ENCODE measurements at regions of chr6 and their contacts with region 1.

Region 1: GRCh38 chr6:33837971-33838665 is 34.3 kb upstream of the MLN start:
- DNase-seq: no peak
- CTCF ChIP-seq: no peak

Region 2: DNA sequence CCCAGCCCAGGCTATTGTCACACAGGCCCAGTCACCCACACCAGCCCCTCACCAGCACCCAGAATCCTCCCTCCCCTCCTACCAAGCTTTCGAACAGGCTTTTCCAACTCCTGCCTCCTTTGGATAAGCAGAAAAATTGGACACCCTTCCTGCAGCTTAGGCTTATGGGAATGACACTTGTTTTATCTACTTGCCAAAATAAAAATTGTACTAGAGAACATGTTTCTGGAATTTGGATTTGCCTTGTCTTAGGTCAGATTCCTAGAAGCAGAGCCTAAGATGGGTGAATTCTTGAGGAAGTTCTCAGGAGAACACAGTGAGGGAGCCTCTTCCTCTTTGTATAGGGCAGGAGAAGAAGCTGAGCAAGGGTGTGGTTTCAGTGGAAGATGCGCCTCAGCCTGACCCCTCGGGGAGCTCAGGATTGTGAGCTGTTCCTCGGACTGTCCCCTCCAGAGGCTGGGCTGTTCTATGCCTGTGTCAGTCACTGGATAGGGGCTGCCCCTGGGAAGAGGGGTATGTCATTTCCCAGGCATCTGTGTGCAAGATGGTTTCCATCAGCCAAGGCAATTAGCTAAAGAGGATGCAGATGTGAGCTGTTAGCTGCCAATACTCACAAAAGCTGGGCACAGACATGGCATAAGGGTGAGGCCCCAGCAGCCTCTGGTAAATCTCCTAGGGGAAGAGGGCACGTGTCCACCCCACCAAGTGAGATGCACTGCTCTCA is 183.1 kb before region 1 on chr6:
- CTCF ChIA-PET with region 1: no interaction called
- POLR2A ChIA-PET with region 1: no interaction called
- DNase-seq: no peak
- CTCF ChIP-seq: no peak

Region 3: DNA sequence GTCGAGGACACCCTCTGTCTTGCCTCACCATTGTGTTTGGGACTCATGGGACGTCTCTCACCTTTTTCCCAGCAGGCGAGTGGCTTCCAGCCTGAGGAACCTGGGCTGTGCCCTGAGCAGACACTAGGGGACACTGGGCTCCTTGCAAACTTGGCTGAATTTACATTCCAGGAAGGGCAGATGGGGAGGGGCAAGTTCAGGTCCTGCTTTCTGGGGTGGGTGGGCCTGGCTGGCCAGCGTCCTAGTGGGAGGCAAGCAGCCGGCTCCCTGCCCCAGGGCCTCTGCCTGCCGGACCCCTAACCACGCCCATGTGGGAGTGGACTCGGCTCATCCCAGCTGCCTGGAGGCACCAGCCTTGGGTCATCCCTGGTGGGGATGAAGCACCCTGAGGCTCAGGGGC is 13.8 kb after region 1 on chr6:
- CTCF ChIA-PET with region 1: interaction called, 10 read pairs
- POLR2A ChIA-PET with region 1: no interaction called
- DNase-seq: no peak
- CTCF ChIP-seq: peak; percentile 48

Measured in GM10248 (cell line).